ENCODE measurements at regions of chr10 and their contacts with region 1.

Region 1: GRCh38 chr10:96418582-96418981 is 59.8 kb upstream of the OPALIN start:
- DNase-seq: no peak
- H3K4me3 ChIP-seq: no peak overlapping the region
- H3K27ac ChIP-seq: no peak overlapping the region
- H3K4me1 ChIP-seq: peaks cover 5% of the 10 kb centered on the region
- H3K27me3 ChIP-seq: no peaks in the 10 kb centered on the region
- CTCF ChIP-seq: no peak

Region 2: GRCh38 chr10:96478317-96478716 is 59.7 kb after region 1 on chr10:
- CTCF ChIA-PET with region 1: interaction called, 10 read pairs
- POLR2A ChIA-PET with region 1: no interaction called
- intact Hi-C with region 1: no loop called
- DNase-seq: no peak
- H3K4me3 ChIP-seq: no peak overlapping the region
- H3K27ac ChIP-seq: no peak overlapping the region
- H3K4me1 ChIP-seq: peaks cover 6% of the 10 kb centered on the region
- H3K27me3 ChIP-seq: peaks cover 10% of the 10 kb centered on the region
- CTCF ChIP-seq: no peak